Naive thymus-derived CD4-positive, alpha-beta T cell (primary cell): ENCODE measurements at regions of chr15 and their contacts with region 1.

Region 1: DNA sequence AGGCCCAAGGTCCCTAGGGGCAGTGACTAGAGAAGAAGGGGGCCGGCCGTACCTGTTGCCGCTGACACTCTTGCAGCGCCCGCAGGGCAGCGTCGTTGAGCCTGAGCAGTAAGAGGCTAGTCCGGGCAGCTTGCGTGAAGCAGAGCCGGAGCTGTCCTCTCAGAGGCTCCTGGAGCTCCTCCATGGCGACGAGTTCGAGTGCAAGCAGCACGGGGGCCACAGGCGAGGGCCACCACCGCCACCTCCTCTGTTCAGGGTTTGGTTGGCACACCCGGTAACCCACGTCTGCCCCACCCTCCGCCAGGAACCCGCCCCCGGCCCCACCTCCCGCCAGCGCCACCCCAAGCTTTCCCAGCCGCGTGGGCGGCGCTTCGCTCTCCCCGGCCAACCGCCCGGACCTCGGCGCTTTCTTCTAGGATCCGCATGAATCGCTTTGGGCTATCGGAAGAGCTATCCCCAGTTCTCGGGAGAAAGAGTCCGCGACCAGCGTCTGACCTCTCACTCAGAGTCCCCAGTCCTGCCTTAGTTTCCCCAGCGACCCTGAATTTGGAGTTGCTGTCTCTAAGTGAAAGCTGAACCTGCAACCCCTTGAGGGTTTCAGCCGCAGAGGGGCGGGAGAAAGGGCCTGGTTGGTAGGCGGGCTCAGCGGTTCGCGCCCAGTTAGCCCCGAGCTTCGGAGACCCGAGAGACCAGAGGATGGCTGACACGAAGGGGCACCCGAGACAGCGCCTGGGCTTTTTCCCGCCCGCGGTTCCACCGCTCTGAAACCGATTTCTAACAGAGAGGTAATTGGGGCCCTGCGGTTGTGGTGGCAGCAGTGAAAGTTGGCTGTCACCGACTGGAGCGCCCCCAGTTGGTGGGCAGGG is at the start of gene ELL3:
- DNase-seq: peak; percentile 69 to 87 (median 86)
- ATAC-seq: peak; percentile 87
- H3K4me3 ChIP-seq: peak within 1 kb of the TSS; percentile 100
- H3K4me3 Mint-ChIP-seq: peak within 1 kb of the TSS; percentile 89 to 97 (median 94)
- H3K27ac ChIP-seq: peak within 1 kb of the TSS; percentile 77
- H3K27ac Mint-ChIP-seq: peak within 1 kb of the TSS; percentile 87 to 97 (median 95)
- H3K4me1 ChIP-seq: peaks cover 0 to 9% of the 10 kb centered on the region in 2 donors
- H3K4me1 Mint-ChIP-seq: peaks cover 5 to 23% (median 11%) of the 10 kb centered on the region in 7 donors
- H3K27me3 ChIP-seq: no peaks in the 10 kb centered on the region
- H3K27me3 Mint-ChIP-seq: peaks cover 0 to 13% (median 0%) of the 10 kb centered on the region in 5 donors
- total RNA-seq, gene ELL3: 1.8 to 2.1 (median 1.9) TPM

Region 2: GRCh38 chr15:43791993-43792760 is 15.2 kb after region 1 on chr15 and contains the start of gene SERF2:
- CTCF ChIA-PET with region 1: interaction called, 5 read pairs
- POLR2A ChIA-PET with region 1: interaction called, 28 read pairs
- intact Hi-C with region 1: loop called (anchors 1 kb)
- DNase-seq: peak; percentile 92 to 99 (median 97)
- ATAC-seq: peak; percentile 97
- H3K4me3 ChIP-seq: peak within 1 kb of the TSS; percentile 98
- H3K4me3 Mint-ChIP-seq: peak within 1 kb of the TSS; percentile 93 to 98 (median 96)
- H3K27ac ChIP-seq: peak within 1 kb of the TSS; percentile 100
- H3K27ac Mint-ChIP-seq: peak within 1 kb of the TSS; percentile 91 to 99 (median 98)
- H3K4me1 ChIP-seq: peaks cover 9 to 22% of the 10 kb centered on the region in 2 donors
- H3K4me1 Mint-ChIP-seq: peaks cover 33 to 54% (median 48%) of the 10 kb centered on the region in 7 donors
- H3K27me3 ChIP-seq: no peaks in the 10 kb centered on the region
- H3K27me3 Mint-ChIP-seq: peaks cover 0 to 2% (median 0%) of the 10 kb centered on the region in 5 donors
- total RNA-seq, gene SERF2: 358 to 676 (median 553) TPM

Region 3: DNA sequence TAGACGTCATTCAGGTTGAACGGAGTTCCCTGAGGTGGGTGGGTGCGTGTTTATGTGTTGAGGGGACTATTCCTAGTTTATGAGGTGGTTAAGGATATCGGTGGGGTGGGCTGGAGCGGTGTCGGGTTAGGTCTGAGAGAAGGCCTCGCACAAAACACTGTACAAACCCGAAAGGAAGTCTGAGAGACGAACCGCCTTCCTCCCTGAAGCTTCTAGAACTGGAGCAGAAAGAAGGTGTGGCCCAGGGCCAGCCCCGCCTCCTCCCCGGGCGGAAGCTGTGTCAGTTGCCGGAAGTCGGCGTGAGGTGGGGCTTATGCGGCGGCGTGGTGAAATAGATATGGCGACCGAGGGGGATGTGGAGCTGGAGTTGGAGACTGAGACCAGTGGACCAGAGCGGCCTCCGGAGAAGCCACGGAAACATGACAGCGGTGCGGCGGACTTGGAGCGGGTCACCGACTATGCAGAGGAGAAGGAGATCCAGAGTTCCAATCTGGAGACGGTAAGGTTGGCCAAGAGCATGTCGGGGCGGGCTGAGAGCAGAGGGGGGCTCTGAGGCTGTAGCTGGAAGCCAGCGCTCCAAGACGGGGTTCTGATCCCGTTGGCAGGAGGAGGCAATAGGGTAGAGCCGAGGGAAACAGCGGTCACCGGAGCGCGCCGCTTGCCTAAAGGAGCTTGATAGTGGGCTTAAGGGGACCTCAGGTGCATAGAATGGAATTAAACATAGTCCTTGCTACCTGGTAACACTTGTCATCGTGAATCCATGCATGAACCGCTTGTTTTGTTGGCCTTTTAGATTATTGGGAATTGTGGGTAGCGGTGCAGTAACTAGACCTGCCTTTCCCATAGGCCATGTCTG is 23.6 kb after region 1 on chr15 and contains the start of gene HYPK:
- CTCF ChIA-PET with region 1: interaction called, 6 read pairs
- POLR2A ChIA-PET with region 1: interaction called, 23 read pairs
- intact Hi-C with region 1: loop called (anchors 1 to 2 kb)
- DNase-seq: peak; percentile 77 to 95 (median 91)
- ATAC-seq: peak; percentile 99
- H3K4me3 ChIP-seq: peak within 1 kb of the TSS; percentile 98
- H3K4me3 Mint-ChIP-seq: peak within 1 kb of the TSS; percentile 89 to 100 (median 99)
- H3K27ac ChIP-seq: peak within 1 kb of the TSS; percentile 85
- H3K27ac Mint-ChIP-seq: peak within 1 kb of the TSS; percentile 94 to 100 (median 97)
- H3K4me1 ChIP-seq: peaks cover 14 to 15% of the 10 kb centered on the region in 2 donors
- H3K4me1 Mint-ChIP-seq: peaks cover 21 to 54% (median 49%) of the 10 kb centered on the region in 7 donors
- H3K27me3 ChIP-seq: no peaks in the 10 kb centered on the region
- H3K27me3 Mint-ChIP-seq: no peaks in the 10 kb centered on the region
- total RNA-seq, gene HYPK: 16.9 to 32.1 (median 27.0) TPM

Region 4: DNA sequence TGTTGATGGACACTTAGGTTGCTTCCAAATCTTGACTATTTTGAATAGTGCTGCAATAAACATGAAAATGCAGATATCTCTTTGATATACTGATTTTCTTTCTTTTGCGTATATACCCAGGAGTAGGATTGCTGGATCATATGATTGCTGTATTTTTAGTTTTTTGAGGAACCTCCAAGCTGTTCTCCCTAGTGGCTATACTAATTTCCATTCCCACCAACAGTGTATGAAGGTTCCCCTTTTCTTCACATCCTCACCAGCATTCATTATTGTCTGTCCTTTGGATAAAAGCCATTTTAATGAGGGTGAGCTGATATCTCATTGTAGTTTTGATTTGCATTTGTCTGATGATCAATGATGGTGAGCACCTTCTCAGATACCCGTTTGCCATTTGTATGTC is 921.7 kb after region 1 on chr15:
- CTCF ChIA-PET with region 1: no interaction called
- POLR2A ChIA-PET with region 1: no interaction called
- intact Hi-C with region 1: no loop called
- DNase-seq: no peak
- ATAC-seq: no peak
- H3K4me3 ChIP-seq: no peak overlapping the region
- H3K4me3 Mint-ChIP-seq: no peak overlapping the region
- H3K27ac ChIP-seq: no peak overlapping the region
- H3K27ac Mint-ChIP-seq: peak overlapping the region in 2 of 9 donors; percentile 7 to 65
- H3K4me1 ChIP-seq: no peaks in the 10 kb centered on the region
- H3K4me1 Mint-ChIP-seq: peaks cover 18 to 49% (median 36%) of the 10 kb centered on the region in 7 donors
- H3K27me3 ChIP-seq: no peaks in the 10 kb centered on the region
- H3K27me3 Mint-ChIP-seq: peaks cover 0 to 20% (median 0%) of the 10 kb centered on the region in 5 donors